ENCODE measurements at regions of chr22 and their contacts with region 1.

Region 1: GRCh38 chr22:27642104-27642800 is 159.3 kb downstream of the MN1 start:
- DNase-seq: peak; percentile 23 to 96 (median 94)
- H3K4me3 ChIP-seq: peak overlapping the region in 1 of 59 donors; percentile 9
- H3K27ac ChIP-seq: peak overlapping the region; percentile 72 to 99 (median 95)
- H3K27me3 ChIP-seq: no peaks in the 10 kb centered on the region
- CTCF ChIP-seq: peak in 24 of 56 donors; percentile 8 to 54 (median 30)

Region 2: DNA sequence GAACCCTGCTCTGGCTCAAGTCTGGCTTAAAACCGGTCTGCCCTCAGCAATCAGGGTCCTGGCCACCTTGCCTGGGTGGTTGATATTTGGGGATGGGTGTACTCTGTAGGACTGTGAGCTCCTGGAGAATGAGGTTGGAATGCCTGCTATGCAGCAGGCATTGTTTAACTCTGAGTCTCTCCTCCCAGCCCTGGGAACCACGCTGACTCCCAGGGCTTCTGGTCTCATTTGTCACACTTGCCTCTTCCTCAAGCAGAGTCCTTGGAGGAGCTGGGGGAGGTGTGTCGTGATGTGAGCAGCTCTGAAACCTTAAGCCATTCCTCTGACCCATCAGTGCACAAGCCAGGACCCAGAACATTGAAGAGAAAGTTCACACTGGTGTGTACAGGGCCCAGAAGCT is 180.8 kb before region 1 on chr22:
- intact Hi-C with region 1: no loop called
- DNase-seq: no peak
- H3K4me3 ChIP-seq: no peak overlapping the region
- H3K27ac ChIP-seq: peak overlapping the region in 51 of 59 donors; percentile 32 to 97 (median 83)
- H3K27me3 ChIP-seq: peaks cover 0 to 13% (median 0%) of the 10 kb centered on the region in 45 donors
- CTCF ChIP-seq: no peak

Region 3: GRCh38 chr22:27581688-27582087 is 60.6 kb before region 1 on chr22:
- intact Hi-C with region 1: loop called in 1 of 2 experiments (anchors 5 kb)
- DNase-seq: peak; percentile 14 to 92 (median 84)
- H3K4me3 ChIP-seq: peak overlapping the region in 3 of 59 donors; percentile 7 to 31 (median 10)
- H3K27ac ChIP-seq: peak overlapping the region in 54 of 59 donors; percentile 1 to 86 (median 62)
- H3K27me3 ChIP-seq: no peaks in the 10 kb centered on the region
- CTCF ChIP-seq: peak in 2 of 56 donors; percentile 14 to 16

Region 4: GRCh38 chr22:27662359-27663030 is 20.2 kb after region 1 on chr22:
- intact Hi-C with region 1: loop called in 1 of 2 experiments (anchors 2 kb)
- DNase-seq: peak in 6 of 10 donors; percentile 40 to 67 (median 50)
- H3K4me3 ChIP-seq: no peak overlapping the region
- H3K27ac ChIP-seq: peak overlapping the region in 37 of 59 donors; percentile 8 to 79 (median 55)
- H3K27me3 ChIP-seq: no peaks in the 10 kb centered on the region
- CTCF ChIP-seq: no peak

Region 5: GRCh38 chr22:27686534-27686933 is 44.3 kb after region 1 on chr22:
- intact Hi-C with region 1: loop called in 1 of 2 experiments (anchors 1 kb)
- DNase-seq: peak; percentile 5 to 91 (median 88)
- H3K4me3 ChIP-seq: no peak overlapping the region
- H3K27ac ChIP-seq: peak overlapping the region; percentile 52 to 99 (median 93)
- H3K27me3 ChIP-seq: no peaks in the 10 kb centered on the region
- CTCF ChIP-seq: peak in 4 of 56 donors; percentile 7 to 47 (median 8)